ENCODE measurements at regions of chr6 and their contacts with region 1.

Region 1: GRCh38 chr6:47288267-47289090 is 21.2 kb downstream of the TNFRSF21 start:
- DNase-seq: no peak

Region 2: GRCh38 chr6:47235964-47236760 is 52.3 kb before region 1 on chr6:
- intact Hi-C with region 1: loop called (anchors 10 kb)
- DNase-seq: no peak

Measured in posterior cingulate gyrus (tissue), 11 donors.